ENCODE measurements at regions of chr4 and their contacts with region 1.

Region 1: GRCh38 chr4:39181905-39182638 is at the start of gene WDR19:
- DNase-seq: peak; percentile 98
- H3K4me3 Mint-ChIP-seq: no peak within 1 kb of the TSS
- H3K27ac Mint-ChIP-seq: no peak within 1 kb of the TSS
- H3K4me1 Mint-ChIP-seq: no peaks in the 10 kb centered on the region
- H3K27me3 Mint-ChIP-seq: peaks cover 15% of the 10 kb centered on the region
- total RNA-seq, gene WDR19: 12.6 and 13.7 TPM in 2 replicates

Region 2: GRCh38 chr4:39085891-39086290 is 96.2 kb before region 1 on chr4:
- intact Hi-C with region 1: no loop called
- DNase-seq: no peak
- H3K4me3 Mint-ChIP-seq: no peak overlapping the region
- H3K27ac Mint-ChIP-seq: no peak overlapping the region
- H3K4me1 Mint-ChIP-seq: peaks cover 29% of the 10 kb centered on the region
- H3K27me3 Mint-ChIP-seq: no peaks in the 10 kb centered on the region

Region 3: DNA sequence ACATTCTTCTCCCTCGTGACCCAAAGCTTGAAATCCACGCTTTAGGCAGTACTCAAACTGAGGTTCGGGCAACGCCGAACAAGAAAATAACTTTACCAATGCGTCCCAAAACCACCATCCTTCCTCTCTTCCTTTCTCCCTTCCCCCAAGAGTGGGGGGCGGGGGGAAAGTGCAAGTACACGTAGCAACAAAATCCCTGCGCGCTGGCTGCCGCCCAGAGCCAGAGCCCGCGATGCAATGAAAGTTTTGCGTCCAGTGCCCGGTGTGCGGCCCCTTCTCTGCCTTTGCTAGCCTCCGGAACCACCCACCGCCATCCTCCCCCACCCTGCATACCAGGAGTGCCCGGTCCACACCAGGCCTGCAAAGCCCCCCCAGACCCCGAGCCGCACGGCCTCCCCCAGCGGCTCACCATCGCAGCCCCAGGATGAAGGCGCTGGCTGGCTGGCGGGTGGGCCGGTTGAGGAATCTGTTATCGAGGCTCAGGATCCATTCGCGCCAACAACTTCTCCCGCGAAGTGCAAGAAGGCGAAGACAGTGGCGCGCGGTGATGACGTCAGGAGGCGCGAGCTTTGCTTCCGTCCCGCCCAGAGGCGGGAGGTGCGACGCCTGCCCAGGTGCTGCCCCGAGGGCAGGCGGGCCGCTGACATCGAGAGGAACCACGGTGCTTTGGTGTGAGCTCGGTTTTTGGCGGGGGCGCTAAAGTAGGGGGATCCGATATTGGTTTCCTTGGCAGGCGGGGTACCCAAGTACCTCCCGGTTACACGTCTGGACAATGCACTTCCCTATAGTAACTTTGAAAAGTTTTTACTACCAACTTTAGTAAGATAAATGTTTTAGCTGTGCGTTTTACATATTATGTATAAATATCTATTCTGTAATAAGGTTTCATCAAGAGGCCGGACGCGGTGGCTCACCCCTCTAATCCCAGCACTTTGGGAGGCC is 184.0 kb after region 1 on chr4 and contains the start of gene RFC1:
- intact Hi-C with region 1: loop called (anchors 1 kb)
- DNase-seq: peak; percentile 89
- H3K4me3 Mint-ChIP-seq: peak within 1 kb of the TSS; percentile 95
- H3K27ac Mint-ChIP-seq: peak within 1 kb of the TSS; percentile 94
- H3K4me1 Mint-ChIP-seq: peaks cover 26% of the 10 kb centered on the region
- H3K27me3 Mint-ChIP-seq: no peaks in the 10 kb centered on the region
- total RNA-seq, gene RFC1: 83.3 and 87.1 TPM in 2 replicates

Region 4: GRCh38 chr4:39638354-39639240 is 456.5 kb after region 1 on chr4 and contains the start of gene SMIM14:
- intact Hi-C with region 1: loop called (anchors 1 kb)
- DNase-seq: peak; percentile 89
- H3K4me3 Mint-ChIP-seq: peak within 1 kb of the TSS; percentile 87
- H3K27ac Mint-ChIP-seq: peak within 1 kb of the TSS; percentile 83
- H3K4me1 Mint-ChIP-seq: peaks cover 22% of the 10 kb centered on the region
- H3K27me3 Mint-ChIP-seq: peaks cover 24% of the 10 kb centered on the region
- total RNA-seq, gene SMIM14: 0.76 and 1.6 TPM in 2 replicates

Measured in activated T-helper 1 cell treated with anti-CD3 and anti-CD28 coated beads, Interleukin-12 subunit alpha, Interleukin-12 subunit beta, Interleukin-2, Interleukin-4 antibody, amounts not matched to agents 30 ng/mL and 10 ng/mL and 1 ng/mL, durations not matched to agents 14 hours and 24 hours and 36 hours (primary cell).